Sigmoid colon (tissue), 7 donors: ENCODE measurements at regions of chr15 and their contacts with region 1.

Region 1: GRCh38 chr15:50576166-50576565 is 29.7 kb upstream of the USP50 start:
- DNase-seq: no peak
- H3K4me3 ChIP-seq: no peak overlapping the region
- H3K27ac ChIP-seq: no peak overlapping the region
- H3K4me1 ChIP-seq: no peaks in the 10 kb centered on the region
- H3K27me3 ChIP-seq: no peaks in the 10 kb centered on the region
- CTCF ChIP-seq: no peak
- EP300 ChIP-seq: no peak
- POLR2A ChIP-seq: no peak

Region 2: GRCh38 chr15:50484781-50485180 is 91.4 kb before region 1 on chr15:
- intact Hi-C with region 1: loop called (anchors 10 kb)
- DNase-seq: no peak
- H3K4me3 ChIP-seq: no peak overlapping the region
- H3K27ac ChIP-seq: no peak overlapping the region
- H3K4me1 ChIP-seq: no peaks in the 10 kb centered on the region
- H3K27me3 ChIP-seq: no peaks in the 10 kb centered on the region
- CTCF ChIP-seq: no peak
- EP300 ChIP-seq: no peak
- POLR2A ChIP-seq: no peak